Ascending aorta (tissue), 2 donors: ENCODE measurements at regions of chr5 and their contacts with region 1.

Region 1: GRCh38 chr5:68433923-68434879 is 218.6 kb downstream of the PIK3R1 start:
- DNase-seq: peak; percentile 93 to 97
- H3K4me3 ChIP-seq: no peak overlapping the region
- H3K27ac ChIP-seq: peak overlapping the region; percentile 78 to 91
- H3K4me1 ChIP-seq: peaks cover 0 to 15% of the 10 kb centered on the region in 2 donors
- H3K27me3 ChIP-seq: no peaks in the 10 kb centered on the region
- CTCF ChIP-seq: no peak

Region 2: GRCh38 chr5:68287976-68288706 is 146.1 kb before region 1 on chr5:
- intact Hi-C with region 1: loop called (anchors 5 kb)
- DNase-seq: peak; percentile 53 to 83
- H3K4me3 ChIP-seq: peak overlapping the region; percentile 63 to 75
- H3K27ac ChIP-seq: peak overlapping the region; percentile 90 to 91
- H3K4me1 ChIP-seq: peaks cover 13 to 52% of the 10 kb centered on the region in 2 donors
- H3K27me3 ChIP-seq: no peaks in the 10 kb centered on the region
- CTCF ChIP-seq: no peak

Region 3: GRCh38 chr5:68343421-68343826 is 90.8 kb before region 1 on chr5:
- intact Hi-C with region 1: loop called (anchors 5 kb)
- DNase-seq: peak; percentile 78 to 92
- H3K4me3 ChIP-seq: no peak overlapping the region
- H3K27ac ChIP-seq: peak overlapping the region; percentile 78 to 80
- H3K4me1 ChIP-seq: peaks cover 0 to 18% of the 10 kb centered on the region in 2 donors
- H3K27me3 ChIP-seq: no peaks in the 10 kb centered on the region
- CTCF ChIP-seq: no peak

Region 4: DNA sequence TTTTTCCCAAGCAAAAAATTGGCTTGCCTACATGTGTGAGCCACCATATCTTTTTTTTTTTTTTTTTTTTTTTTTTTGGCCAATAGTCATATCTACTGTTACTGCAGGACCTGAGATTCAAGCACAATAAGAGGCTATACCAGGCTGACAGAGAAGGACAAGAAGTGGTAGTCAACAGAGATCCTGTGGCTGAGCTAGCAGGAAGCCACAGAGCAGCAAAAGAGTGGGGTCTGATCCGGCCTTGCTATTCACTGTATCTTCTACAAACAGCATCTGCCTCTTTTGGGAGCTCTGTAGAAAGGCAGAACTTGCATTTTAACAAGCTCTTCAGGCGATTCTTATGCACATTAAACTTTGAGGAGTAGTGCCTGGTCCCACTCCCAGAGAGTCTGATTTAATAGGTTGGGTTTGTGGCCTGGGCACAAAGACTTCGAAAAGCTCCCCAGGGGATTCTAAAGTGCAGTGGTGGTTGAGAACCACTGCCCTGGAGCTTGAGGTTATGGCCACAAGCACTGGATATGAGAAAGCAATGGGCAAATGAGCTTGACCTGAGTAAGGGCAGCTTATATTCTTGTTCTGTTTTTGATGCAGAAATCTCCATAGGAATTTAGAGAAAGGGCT is 55.9 kb before region 1 on chr5:
- intact Hi-C with region 1: loop called (anchors 5 kb)
- DNase-seq: no peak
- H3K4me3 ChIP-seq: no peak overlapping the region
- H3K27ac ChIP-seq: peak overlapping the region; percentile 13 to 56
- H3K4me1 ChIP-seq: peaks cover 0 to 20% of the 10 kb centered on the region in 2 donors
- H3K27me3 ChIP-seq: no peaks in the 10 kb centered on the region
- CTCF ChIP-seq: no peak

Region 5: GRCh38 chr5:68419637-68420452 is 14.4 kb before region 1 on chr5:
- intact Hi-C with region 1: loop called (anchors 2 kb)
- DNase-seq: no peak
- H3K4me3 ChIP-seq: no peak overlapping the region
- H3K27ac ChIP-seq: peak overlapping the region in 1 of 2 donors; percentile 71
- H3K4me1 ChIP-seq: peaks cover 7 to 15% of the 10 kb centered on the region in 2 donors
- H3K27me3 ChIP-seq: no peaks in the 10 kb centered on the region
- CTCF ChIP-seq: no peak

Region 6: GRCh38 chr5:68446487-68446894 is 12.3 kb after region 1 on chr5:
- intact Hi-C with region 1: loop called (anchors 2 kb)
- DNase-seq: no peak
- H3K4me3 ChIP-seq: no peak overlapping the region
- H3K27ac ChIP-seq: no peak overlapping the region
- H3K4me1 ChIP-seq: peaks cover 0 to 16% of the 10 kb centered on the region in 2 donors
- H3K27me3 ChIP-seq: no peaks in the 10 kb centered on the region
- CTCF ChIP-seq: no peak